PC-9 (cell line): ENCODE measurements at regions of chr2 and their contacts with region 1.

Region 1: GRCh38 chr2:235444101-235444617 is 49.7 kb upstream of the AGAP1 start:
- DNase-seq: peak; percentile 86 to 97
- H3K4me3 ChIP-seq: peak overlapping the region; percentile 16; the same call in 1 of the 2 replicates
- H3K27ac ChIP-seq: peak overlapping the region; percentile 89
- H3K4me1 ChIP-seq: peaks cover 11% of the 10 kb centered on the region
- H3K27me3 ChIP-seq: no peaks in the 10 kb centered on the region
- CTCF ChIP-seq: no peak

Region 2: GRCh38 chr2:235330775-235331451 is 113.2 kb before region 1 on chr2:
- CTCF ChIA-PET with region 1: no interaction called
- POLR2A ChIA-PET with region 1: interaction called, 13 read pairs
- intact Hi-C with region 1: no loop called
- DNase-seq: peak; percentile 83 to 95
- H3K4me3 ChIP-seq: peak overlapping the region; percentile 20; the same call in 1 of the 2 replicates
- H3K27ac ChIP-seq: peak overlapping the region; percentile 46
- H3K4me1 ChIP-seq: peaks cover 19% of the 10 kb centered on the region
- H3K27me3 ChIP-seq: no peaks in the 10 kb centered on the region
- CTCF ChIP-seq: no peak

Region 3: DNA sequence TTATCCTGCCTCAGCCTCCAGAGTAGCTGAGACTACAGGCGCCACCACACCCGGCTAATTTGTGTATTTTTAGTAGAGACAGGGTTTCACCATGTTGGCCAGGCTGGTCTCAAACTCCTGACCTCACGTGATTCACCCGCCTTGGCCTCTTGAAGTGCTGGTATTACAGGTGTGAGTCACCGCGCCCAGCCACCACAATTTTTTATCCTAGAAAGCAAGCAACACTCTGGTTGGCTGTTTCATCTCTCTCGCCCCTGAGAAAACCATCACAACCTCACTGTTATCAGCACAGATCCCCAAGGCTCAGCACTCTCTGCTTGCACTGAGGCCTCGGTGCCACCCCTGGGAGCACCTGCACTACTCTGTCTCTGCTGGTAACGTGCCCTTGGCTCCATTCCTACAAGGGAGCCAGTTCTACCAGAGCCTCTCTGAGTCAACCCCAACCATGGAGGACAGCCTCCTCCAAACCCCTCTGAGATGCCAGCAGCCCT is 85.1 kb before region 1 on chr2:
- CTCF ChIA-PET with region 1: interaction called, 3 read pairs
- POLR2A ChIA-PET with region 1: interaction called, 10 read pairs
- intact Hi-C with region 1: no loop called
- DNase-seq: peak; percentile 91 to 96
- H3K4me3 ChIP-seq: no peak overlapping the region
- H3K27ac ChIP-seq: peak overlapping the region; percentile 23; the same call in 1 of the 2 replicates
- H3K4me1 ChIP-seq: peaks cover 28% of the 10 kb centered on the region
- H3K27me3 ChIP-seq: no peaks in the 10 kb centered on the region
- CTCF ChIP-seq: no peak

Region 4: DNA sequence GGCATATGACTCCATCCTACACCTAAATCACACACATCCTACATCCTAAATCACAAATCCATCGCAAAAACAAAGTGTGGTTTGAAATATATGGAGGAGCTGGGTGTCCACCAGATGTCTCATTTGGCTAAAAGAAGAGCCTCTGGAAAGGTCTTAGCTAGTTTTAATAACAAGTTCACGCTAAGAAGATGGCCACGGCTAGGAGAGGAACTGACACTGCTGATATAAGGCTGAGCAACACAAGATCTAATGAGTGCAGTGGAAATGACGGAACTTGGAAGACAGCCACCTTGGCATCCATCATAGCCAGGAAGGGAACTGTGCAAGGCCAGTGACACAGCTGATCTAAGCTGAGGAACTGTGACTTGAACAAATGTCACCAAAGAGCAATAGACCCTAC is 10.3 kb before region 1 on chr2:
- CTCF ChIA-PET with region 1: interaction called, 8 read pairs
- POLR2A ChIA-PET with region 1: interaction called, 12 read pairs
- intact Hi-C with region 1: no loop called
- DNase-seq: no peak
- H3K4me3 ChIP-seq: no peak overlapping the region
- H3K27ac ChIP-seq: no peak overlapping the region
- H3K4me1 ChIP-seq: no peaks in the 10 kb centered on the region
- H3K27me3 ChIP-seq: no peaks in the 10 kb centered on the region
- CTCF ChIP-seq: no peak

Region 5: GRCh38 chr2:235458839-235459273 is 14.7 kb after region 1 on chr2:
- CTCF ChIA-PET with region 1: interaction called, 3 read pairs
- POLR2A ChIA-PET with region 1: no interaction called
- intact Hi-C with region 1: loop called (anchors 1 kb)
- DNase-seq: peak; percentile 93 to 97
- H3K4me3 ChIP-seq: no peak overlapping the region
- H3K27ac ChIP-seq: peak overlapping the region; percentile 43
- H3K4me1 ChIP-seq: peaks cover 22% of the 10 kb centered on the region
- H3K27me3 ChIP-seq: no peaks in the 10 kb centered on the region
- CTCF ChIP-seq: no peak

Region 6: GRCh38 chr2:235493775-235494715 is 49.9 kb after region 1 on chr2 and contains the start of gene AGAP1:
- CTCF ChIA-PET with region 1: no interaction called
- POLR2A ChIA-PET with region 1: no interaction called
- intact Hi-C with region 1: loop called (anchors 2 kb)
- DNase-seq: peak; percentile 75 to 97
- H3K4me3 ChIP-seq: peak within 1 kb of the TSS; percentile 77
- H3K27ac ChIP-seq: peak within 1 kb of the TSS; percentile 69
- H3K4me1 ChIP-seq: peaks cover 20% of the 10 kb centered on the region
- H3K27me3 ChIP-seq: no peaks in the 10 kb centered on the region
- CTCF ChIP-seq: no peak
- total RNA-seq, gene AGAP1: 91.4 and 107 TPM in 2 replicates